ENCODE measurements at regions of chr5 and their contacts with region 1.

Region 1: DNA sequence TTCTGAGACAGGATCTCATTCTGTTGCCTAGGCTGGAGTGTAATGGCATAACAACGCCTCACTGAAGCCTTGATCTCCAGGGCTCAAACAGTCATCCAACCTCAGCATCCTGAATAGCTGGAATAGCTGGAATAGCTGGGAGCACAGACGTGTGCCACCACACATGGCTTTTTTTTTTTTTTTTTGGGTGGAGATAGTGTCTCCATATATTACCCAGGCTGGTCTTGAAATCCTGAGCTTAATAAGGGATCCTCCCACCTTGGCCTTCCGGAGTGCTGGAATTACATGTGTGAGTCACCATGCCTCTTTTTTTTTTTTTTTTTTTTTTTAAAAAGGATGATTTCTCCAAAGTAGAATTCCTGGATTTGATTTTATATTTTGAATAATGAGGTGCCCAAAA is 60.7 kb downstream of the NSD1 start:
- DNase-seq: peak; percentile 22
- ATAC-seq: peak; percentile 89
- H3K4me3 ChIP-seq: no peak overlapping the region
- H3K27ac ChIP-seq: no peak overlapping the region
- H3K4me1 ChIP-seq: 0 out of 2 replicates have a peak, but pooled peaks cover 3% of the 10 kb centered on the region
- H3K27me3 ChIP-seq: no peaks in the 10 kb centered on the region
- CTCF ChIP-seq: no peak

Region 2: GRCh38 chr5:176994460-176995121 is 199.7 kb before region 1 on chr5:
- CTCF ChIA-PET with region 1: interaction called, 16 read pairs
- POLR2A ChIA-PET with region 1: no interaction called
- in situ Hi-C with region 1: no loop called
- intact Hi-C with region 1: no loop called
- DNase-seq: no peak
- ATAC-seq: no peak
- H3K4me3 ChIP-seq: no peak overlapping the region
- H3K27ac ChIP-seq: no peak overlapping the region
- H3K4me1 ChIP-seq: no peaks in the 10 kb centered on the region; the same call in 1 of the 2 replicates
- H3K27me3 ChIP-seq: no peaks in the 10 kb centered on the region
- CTCF ChIP-seq: no peak

Region 3: GRCh38 chr5:177071666-177072385 is 122.4 kb before region 1 on chr5:
- CTCF ChIA-PET with region 1: no interaction called
- POLR2A ChIA-PET with region 1: no interaction called
- in situ Hi-C with region 1: no loop called
- intact Hi-C with region 1: no loop called
- DNase-seq: peak; percentile 82
- ATAC-seq: peak; percentile 95
- H3K4me3 ChIP-seq: no peak overlapping the region
- H3K27ac ChIP-seq: no peak overlapping the region
- H3K4me1 ChIP-seq: no peaks in the 10 kb centered on the region
- H3K27me3 ChIP-seq: no peaks in the 10 kb centered on the region
- CTCF ChIP-seq: peak; percentile 93

Region 4: GRCh38 chr5:177220576-177220975 is 26.3 kb after region 1 on chr5:
- CTCF ChIA-PET with region 1: no interaction called
- POLR2A ChIA-PET with region 1: interaction called, 11 read pairs
- in situ Hi-C with region 1: no loop called
- intact Hi-C with region 1: no loop called
- DNase-seq: no peak
- ATAC-seq: no peak
- H3K4me3 ChIP-seq: no peak overlapping the region
- H3K27ac ChIP-seq: no peak overlapping the region
- H3K4me1 ChIP-seq: no peaks in the 10 kb centered on the region
- H3K27me3 ChIP-seq: no peaks in the 10 kb centered on the region
- CTCF ChIP-seq: no peak

Region 5: DNA sequence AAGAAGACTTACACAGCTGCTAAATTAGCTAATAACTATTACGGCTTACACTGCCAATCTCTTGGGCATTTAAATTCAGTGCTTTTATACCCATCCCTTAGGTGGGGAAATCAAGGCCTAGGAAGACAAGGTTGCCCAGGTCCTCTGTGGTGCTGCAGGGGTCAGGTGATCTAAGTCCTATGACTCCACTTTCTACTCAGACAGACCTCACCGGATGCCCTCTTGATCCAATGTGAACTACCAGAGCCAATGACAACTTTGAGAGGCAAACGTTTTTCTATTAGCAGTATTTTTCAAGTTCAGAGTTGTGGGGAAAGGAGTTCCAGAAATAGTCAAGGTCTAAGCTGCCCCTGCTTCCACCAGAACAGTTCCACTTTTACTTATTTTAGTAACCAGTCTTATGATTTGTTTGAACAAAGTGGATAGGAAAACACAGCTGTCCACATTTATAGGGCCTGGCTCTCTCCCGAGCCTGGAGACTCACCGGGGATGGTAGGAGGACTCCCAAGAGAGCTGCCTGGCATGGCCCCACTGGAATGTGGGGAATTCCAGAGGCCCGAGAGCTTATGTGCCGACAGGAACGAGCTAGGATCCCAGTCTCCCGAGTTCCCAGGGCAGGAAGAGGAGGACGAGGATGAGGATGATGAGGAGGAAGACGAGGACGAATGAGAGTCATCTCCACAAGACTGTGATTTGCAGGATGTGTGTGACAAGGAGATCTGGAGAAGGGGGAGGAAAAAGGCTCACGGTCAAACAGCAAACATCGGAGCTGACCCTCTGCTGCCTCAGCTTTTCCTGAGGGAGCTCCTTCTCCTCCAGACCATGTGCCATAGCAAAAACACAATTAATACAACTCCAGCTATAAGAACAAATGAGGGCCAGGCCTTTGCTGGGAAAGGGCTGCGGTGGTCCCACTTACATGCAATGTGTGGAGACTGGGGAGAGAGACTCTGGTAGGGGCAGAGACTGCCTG is 343.4 kb after region 1 on chr5:
- CTCF ChIA-PET with region 1: no interaction called
- POLR2A ChIA-PET with region 1: no interaction called
- in situ Hi-C with region 1: no loop called
- intact Hi-C with region 1: no loop called
- DNase-seq: no peak
- ATAC-seq: peak; percentile 95
- H3K4me3 ChIP-seq: peak overlapping the region in 1 of 2 experiments; percentile 12; a peak in 1 of 4 replicates
- H3K27ac ChIP-seq: peak overlapping the region; percentile 94
- H3K4me1 ChIP-seq: peaks cover 46% of the 10 kb centered on the region
- H3K27me3 ChIP-seq: no peaks in the 10 kb centered on the region
- CTCF ChIP-seq: no peak